B cell (primary cell): ENCODE measurements at regions of chr16 and their contacts with region 1.

Region 1: DNA sequence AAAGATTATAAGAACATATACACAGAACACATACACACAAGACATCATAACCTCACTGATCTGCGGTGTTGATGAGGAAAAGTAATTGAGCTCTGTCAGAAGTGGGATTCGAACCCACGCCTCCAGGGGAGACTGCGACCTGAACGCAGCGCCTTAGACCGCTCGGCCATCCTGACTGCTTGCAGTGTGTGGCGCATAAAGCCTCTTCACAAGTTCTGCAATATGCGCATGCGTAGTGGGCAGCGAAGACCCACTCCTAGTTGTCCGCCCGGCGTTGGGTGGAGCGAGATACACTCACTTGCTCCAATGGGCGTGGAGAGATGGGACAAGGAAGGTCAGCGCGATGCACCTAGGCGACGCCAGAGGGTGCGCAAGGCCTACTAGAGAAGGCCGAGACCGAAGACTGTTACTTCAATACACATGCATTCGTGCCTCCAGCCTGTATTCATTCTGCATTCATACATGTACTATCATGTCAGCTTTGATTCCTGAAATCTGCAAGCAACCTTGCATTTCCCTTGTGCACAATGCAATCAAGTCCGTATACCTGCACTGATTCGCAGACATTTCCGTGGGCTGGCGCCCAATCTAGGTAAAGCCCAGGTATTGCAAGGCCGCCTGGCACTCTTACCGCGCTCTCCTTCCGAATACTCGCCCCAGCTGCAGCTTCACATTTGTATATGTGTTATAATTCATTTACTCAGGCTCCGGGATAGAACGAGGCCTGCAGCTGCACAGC is 16.1 kb upstream of the PLLP start:
- DNase-seq: peak; percentile 100
- ATAC-seq: peak; percentile 93
- H3K4me3 ChIP-seq: peak overlapping the region; percentile 59 to 89 (median 71)
- H3K4me3 Mint-ChIP-seq: no peak overlapping the region
- H3K27ac ChIP-seq: peak overlapping the region; percentile 76 to 85
- H3K27ac Mint-ChIP-seq: no peak overlapping the region
- H3K4me1 ChIP-seq: peaks cover 14 to 31% of the 10 kb centered on the region in 2 donors
- H3K4me1 Mint-ChIP-seq: peaks cover 19% of the 10 kb centered on the region
- H3K27me3 ChIP-seq: no peaks in the 10 kb centered on the region
- H3K27me3 Mint-ChIP-seq: no peaks in the 10 kb centered on the region
- CTCF ChIP-seq: peak; percentile 92

Region 2: GRCh38 chr16:57244767-57245471 is 55.6 kb before region 1 on chr16 and contains the start of gene ARL2BP:
- CTCF ChIA-PET with region 1: interaction called, 4 read pairs
- POLR2A ChIA-PET with region 1: interaction called, 3 read pairs
- intact Hi-C with region 1: loop called (anchors 1 kb)
- DNase-seq: peak; percentile 96
- ATAC-seq: peak; percentile 95
- H3K4me3 ChIP-seq: peak within 1 kb of the TSS; percentile 74 to 85 (median 79)
- H3K4me3 Mint-ChIP-seq: peak within 1 kb of the TSS; percentile 99
- H3K27ac ChIP-seq: peak within 1 kb of the TSS; percentile 79 to 92
- H3K27ac Mint-ChIP-seq: peak within 1 kb of the TSS; percentile 96
- H3K4me1 ChIP-seq: peaks cover 26 to 33% of the 10 kb centered on the region in 2 donors
- H3K4me1 Mint-ChIP-seq: peaks cover 34% of the 10 kb centered on the region
- H3K27me3 ChIP-seq: no peaks in the 10 kb centered on the region
- H3K27me3 Mint-ChIP-seq: no peaks in the 10 kb centered on the region
- CTCF ChIP-seq: no peak
- total RNA-seq, gene ARL2BP: 36.8 and 38.8 TPM in 2 replicates

Region 3: GRCh38 chr16:57349212-57350031 is 48.9 kb after region 1 on chr16:
- CTCF ChIA-PET with region 1: interaction called, 8 read pairs
- POLR2A ChIA-PET with region 1: interaction called, 5 read pairs
- intact Hi-C with region 1: loop called (anchors 1 kb)
- DNase-seq: peak; percentile 90
- ATAC-seq: peak; percentile 98
- H3K4me3 ChIP-seq: peak overlapping the region in 2 of 5 experiments; percentile 2 to 39
- H3K4me3 Mint-ChIP-seq: peak overlapping the region; percentile 50
- H3K27ac ChIP-seq: no peak overlapping the region
- H3K27ac Mint-ChIP-seq: peak overlapping the region; percentile 47
- H3K4me1 ChIP-seq: peaks cover 16 to 17% of the 10 kb centered on the region in 2 donors
- H3K4me1 Mint-ChIP-seq: peaks cover 32% of the 10 kb centered on the region
- H3K27me3 ChIP-seq: peaks cover 0 to 13% (median 6%) of the 10 kb centered on the region in 4 experiments
- H3K27me3 Mint-ChIP-seq: peaks cover 14% of the 10 kb centered on the region
- CTCF ChIP-seq: no peak

Region 4: GRCh38 chr16:57422026-57422944 is 121.7 kb after region 1 on chr16:
- CTCF ChIA-PET with region 1: interaction called, 364 read pairs
- POLR2A ChIA-PET with region 1: interaction called, 11 read pairs
- intact Hi-C with region 1: loop called (anchors 1 kb)
- DNase-seq: no peak
- ATAC-seq: no peak
- H3K4me3 ChIP-seq: no peak overlapping the region
- H3K4me3 Mint-ChIP-seq: no peak overlapping the region
- H3K27ac ChIP-seq: no peak overlapping the region
- H3K27ac Mint-ChIP-seq: no peak overlapping the region
- H3K4me1 ChIP-seq: peaks cover 10 to 13% of the 10 kb centered on the region in 2 donors
- H3K4me1 Mint-ChIP-seq: peaks cover 17% of the 10 kb centered on the region
- H3K27me3 ChIP-seq: no peaks in the 10 kb centered on the region
- H3K27me3 Mint-ChIP-seq: no peaks in the 10 kb centered on the region
- CTCF ChIP-seq: no peak

Region 5: GRCh38 chr16:57530104-57530521 is 229.6 kb after region 1 on chr16:
- CTCF ChIA-PET with region 1: no interaction called
- POLR2A ChIA-PET with region 1: no interaction called
- intact Hi-C with region 1: loop called (anchors 5 kb)
- DNase-seq: peak; percentile 75
- ATAC-seq: peak; percentile 72
- H3K4me3 ChIP-seq: peak overlapping the region in 4 of 5 experiments; percentile 4 to 20 (median 10)
- H3K4me3 Mint-ChIP-seq: peak overlapping the region; percentile 86
- H3K27ac ChIP-seq: peak overlapping the region; percentile 73 to 83
- H3K27ac Mint-ChIP-seq: peak overlapping the region; percentile 97
- H3K4me1 ChIP-seq: peaks cover 61 to 66% of the 10 kb centered on the region in 2 donors
- H3K4me1 Mint-ChIP-seq: peaks cover 68% of the 10 kb centered on the region
- H3K27me3 ChIP-seq: no peaks in the 10 kb centered on the region
- H3K27me3 Mint-ChIP-seq: no peaks in the 10 kb centered on the region
- CTCF ChIP-seq: no peak